ENCODE measurements at regions of chr3 and their contacts with region 1.

Region 1: GRCh38 chr3:149969940-149970715 is 567 bp downstream of the PFN2 start:
- DNase-seq: peak; percentile 76
- ATAC-seq: peak; percentile 76
- H3K4me3 Mint-ChIP-seq: peak overlapping the region; percentile 90
- H3K27ac Mint-ChIP-seq: peak overlapping the region; percentile 53
- H3K4me1 Mint-ChIP-seq: peaks cover 23% of the 10 kb centered on the region
- H3K27me3 Mint-ChIP-seq: peaks cover 15% of the 10 kb centered on the region
- CTCF ChIP-seq: no peak

Region 2: DNA sequence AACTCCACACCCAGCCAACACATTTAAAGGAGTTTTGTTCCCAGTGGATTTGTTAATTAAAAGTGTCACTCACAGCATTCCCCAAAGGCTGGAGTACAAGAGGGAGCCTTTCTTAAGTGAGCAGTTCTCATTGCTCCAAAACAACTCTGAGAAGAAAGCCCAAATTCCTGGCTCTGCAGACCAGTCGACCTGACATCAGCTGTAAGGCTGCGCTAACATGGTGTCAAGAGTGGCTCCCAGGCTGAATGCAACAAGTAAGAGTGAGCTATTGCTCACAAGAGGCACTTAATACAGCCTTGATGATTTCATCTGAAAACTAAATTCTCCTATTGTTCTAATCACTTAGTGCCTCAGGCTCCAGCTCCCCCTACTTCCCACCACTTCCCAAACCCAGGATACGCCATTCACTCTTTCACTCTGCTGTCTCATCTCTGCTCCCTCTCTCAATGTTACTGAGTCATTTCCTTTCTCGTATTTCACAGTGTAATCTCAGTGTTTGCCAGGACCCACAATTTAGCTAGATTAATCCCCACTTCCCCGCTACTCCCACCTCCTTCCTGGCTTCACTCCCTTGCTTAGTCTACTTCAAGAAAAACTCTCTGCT is 394.1 kb before region 1 on chr3:
- CTCF ChIA-PET with region 1: no interaction called
- POLR2A ChIA-PET with region 1: no interaction called
- intact Hi-C with region 1: no loop called
- DNase-seq: no peak
- ATAC-seq: no peak
- H3K4me3 Mint-ChIP-seq: no peak overlapping the region
- H3K27ac Mint-ChIP-seq: no peak overlapping the region
- H3K4me1 Mint-ChIP-seq: peaks cover 4% of the 10 kb centered on the region
- H3K27me3 Mint-ChIP-seq: no peaks in the 10 kb centered on the region
- CTCF ChIP-seq: no peak

Region 3: DNA sequence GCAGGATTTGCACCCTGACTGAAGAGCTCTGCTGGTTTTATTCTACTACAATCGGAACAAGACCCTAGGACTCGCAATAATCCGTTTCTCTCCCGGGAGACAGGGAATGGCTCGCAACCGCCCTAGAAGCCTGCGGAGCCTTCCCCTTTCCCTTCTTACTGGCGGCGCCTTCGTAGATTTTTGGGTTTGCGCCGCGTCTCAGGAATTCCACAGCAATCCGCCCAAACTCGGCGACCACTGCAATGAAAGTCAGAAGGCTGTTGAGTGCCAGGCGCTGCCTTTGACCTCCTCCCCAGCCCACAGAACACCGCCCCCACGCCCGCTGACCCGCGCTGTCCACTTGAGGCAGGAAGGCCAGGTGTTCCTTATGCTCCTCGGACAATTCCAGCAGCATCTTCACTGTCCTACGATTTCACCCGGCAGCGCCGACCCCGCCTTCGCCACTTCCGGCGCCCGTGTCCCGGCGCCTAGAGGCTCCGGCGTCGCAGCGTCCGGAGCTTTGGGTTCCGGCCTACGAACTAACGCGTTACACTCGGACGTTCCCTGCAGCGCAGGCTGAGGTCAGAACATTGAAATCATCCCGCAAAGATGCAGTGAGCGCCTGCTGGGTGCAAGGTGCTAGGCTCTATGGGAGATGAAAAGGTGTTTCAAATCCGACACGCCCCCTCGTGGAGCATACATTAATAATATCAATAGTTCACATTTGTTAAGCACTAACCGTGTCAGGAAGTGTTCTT is 217.9 kb before region 1 on chr3 and contains the start of gene COMMD2:
- CTCF ChIA-PET with region 1: no interaction called
- POLR2A ChIA-PET with region 1: no interaction called
- intact Hi-C with region 1: loop called (anchors 1 kb)
- DNase-seq: peak; percentile 68
- ATAC-seq: peak; percentile 99
- H3K4me3 Mint-ChIP-seq: peak within 1 kb of the TSS; percentile 98
- H3K27ac Mint-ChIP-seq: peak within 1 kb of the TSS; percentile 92
- H3K4me1 Mint-ChIP-seq: peaks cover 30% of the 10 kb centered on the region
- H3K27me3 Mint-ChIP-seq: peaks cover 7% of the 10 kb centered on the region
- CTCF ChIP-seq: no peak
- total RNA-seq, gene COMMD2: 41.5 and 45.6 TPM in 2 replicates

Region 4: GRCh38 chr3:150220799-150221198 is 250.7 kb after region 1 on chr3:
- CTCF ChIA-PET with region 1: interaction called, 24 read pairs
- POLR2A ChIA-PET with region 1: no interaction called
- intact Hi-C with region 1: loop called (anchors 1 kb)
- DNase-seq: no peak
- ATAC-seq: no peak
- H3K4me3 Mint-ChIP-seq: no peak overlapping the region
- H3K27ac Mint-ChIP-seq: no peak overlapping the region
- H3K4me1 Mint-ChIP-seq: peaks cover 6% of the 10 kb centered on the region
- H3K27me3 Mint-ChIP-seq: peaks cover 51% of the 10 kb centered on the region
- CTCF ChIP-seq: no peak

Region 5: DNA sequence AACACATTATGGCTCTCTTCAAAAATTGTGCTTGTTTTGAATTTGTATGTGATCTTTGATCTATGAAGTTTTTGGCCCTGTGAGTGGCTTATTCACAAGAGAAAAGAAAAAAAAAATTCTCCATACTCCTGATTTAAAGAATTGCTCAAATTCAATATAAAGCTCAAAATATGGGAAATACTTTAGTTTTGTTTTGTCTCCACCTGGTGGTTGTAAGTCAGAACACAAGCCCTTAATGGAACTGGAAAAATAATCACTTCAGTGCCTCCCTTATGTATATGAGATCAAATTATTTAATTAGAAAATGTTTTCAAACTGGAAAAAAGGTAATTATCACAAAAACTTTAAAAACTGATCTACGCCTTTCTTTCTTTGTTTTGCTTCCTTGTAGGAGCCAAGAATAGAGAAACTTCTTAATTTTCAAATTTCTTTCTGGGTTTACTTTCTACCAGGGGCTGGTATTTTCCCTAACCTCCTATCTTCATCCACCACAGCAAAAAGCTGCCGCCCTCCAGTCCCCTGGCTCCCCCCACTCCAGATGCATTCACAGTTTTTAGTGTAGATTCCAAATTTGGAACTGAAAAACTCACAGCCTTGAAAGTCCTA is 525.5 kb after region 1 on chr3:
- CTCF ChIA-PET with region 1: interaction called, 7 read pairs
- POLR2A ChIA-PET with region 1: no interaction called
- intact Hi-C with region 1: loop called (anchors 1 kb)
- DNase-seq: no peak
- ATAC-seq: peak; percentile 60
- H3K4me3 Mint-ChIP-seq: no peak overlapping the region
- H3K27ac Mint-ChIP-seq: no peak overlapping the region
- H3K4me1 Mint-ChIP-seq: no peaks in the 10 kb centered on the region
- H3K27me3 Mint-ChIP-seq: no peaks in the 10 kb centered on the region
- CTCF ChIP-seq: peak; percentile 75

Region 6: GRCh38 chr3:150861851-150862250 is 891.7 kb after region 1 on chr3:
- CTCF ChIA-PET with region 1: no interaction called
- POLR2A ChIA-PET with region 1: no interaction called
- intact Hi-C with region 1: loop called (anchors 5 kb)
- DNase-seq: no peak
- ATAC-seq: no peak
- H3K4me3 Mint-ChIP-seq: no peak overlapping the region
- H3K27ac Mint-ChIP-seq: no peak overlapping the region
- H3K4me1 Mint-ChIP-seq: peaks cover 2% of the 10 kb centered on the region
- H3K27me3 Mint-ChIP-seq: peaks cover 5% of the 10 kb centered on the region
- CTCF ChIP-seq: no peak

Region 7: DNA sequence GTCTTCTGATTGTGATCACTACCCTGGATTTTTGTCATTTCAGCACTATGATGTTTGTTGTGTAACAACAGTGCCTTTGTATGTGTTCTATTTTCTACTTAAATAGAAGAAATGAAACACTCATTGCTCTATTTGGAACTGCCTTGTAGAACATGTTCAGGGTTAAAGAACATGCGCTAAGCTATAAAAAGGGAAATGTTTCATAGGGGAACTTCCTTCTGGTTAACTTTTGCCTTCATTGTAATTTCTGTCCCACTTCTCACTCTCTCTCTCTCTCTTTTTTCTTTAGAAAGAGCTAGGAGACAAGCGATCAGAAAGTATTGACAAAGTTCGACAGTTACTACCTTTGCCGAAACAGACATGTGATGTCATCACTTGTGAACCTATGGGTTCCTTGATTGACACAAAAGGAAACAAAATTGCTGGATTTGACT is 1414.6 kb after region 1 on chr3 and contains the start of gene P2RY12:
- CTCF ChIA-PET with region 1: no interaction called
- POLR2A ChIA-PET with region 1: no interaction called
- intact Hi-C with region 1: loop called (anchors 2 kb)
- DNase-seq: no peak
- ATAC-seq: peak; percentile 29
- H3K4me3 Mint-ChIP-seq: peak within 1 kb of the TSS; percentile 79
- H3K27ac Mint-ChIP-seq: peak within 1 kb of the TSS; percentile 97
- H3K4me1 Mint-ChIP-seq: peaks cover 76% of the 10 kb centered on the region
- H3K27me3 Mint-ChIP-seq: no peaks in the 10 kb centered on the region
- CTCF ChIP-seq: no peak
- total RNA-seq, gene P2RY12: 0.58 and 0.64 TPM in 2 replicates